IMR-90 (cell line): ENCODE measurements at regions of chr10 and their contacts with region 1.

Region 1: DNA sequence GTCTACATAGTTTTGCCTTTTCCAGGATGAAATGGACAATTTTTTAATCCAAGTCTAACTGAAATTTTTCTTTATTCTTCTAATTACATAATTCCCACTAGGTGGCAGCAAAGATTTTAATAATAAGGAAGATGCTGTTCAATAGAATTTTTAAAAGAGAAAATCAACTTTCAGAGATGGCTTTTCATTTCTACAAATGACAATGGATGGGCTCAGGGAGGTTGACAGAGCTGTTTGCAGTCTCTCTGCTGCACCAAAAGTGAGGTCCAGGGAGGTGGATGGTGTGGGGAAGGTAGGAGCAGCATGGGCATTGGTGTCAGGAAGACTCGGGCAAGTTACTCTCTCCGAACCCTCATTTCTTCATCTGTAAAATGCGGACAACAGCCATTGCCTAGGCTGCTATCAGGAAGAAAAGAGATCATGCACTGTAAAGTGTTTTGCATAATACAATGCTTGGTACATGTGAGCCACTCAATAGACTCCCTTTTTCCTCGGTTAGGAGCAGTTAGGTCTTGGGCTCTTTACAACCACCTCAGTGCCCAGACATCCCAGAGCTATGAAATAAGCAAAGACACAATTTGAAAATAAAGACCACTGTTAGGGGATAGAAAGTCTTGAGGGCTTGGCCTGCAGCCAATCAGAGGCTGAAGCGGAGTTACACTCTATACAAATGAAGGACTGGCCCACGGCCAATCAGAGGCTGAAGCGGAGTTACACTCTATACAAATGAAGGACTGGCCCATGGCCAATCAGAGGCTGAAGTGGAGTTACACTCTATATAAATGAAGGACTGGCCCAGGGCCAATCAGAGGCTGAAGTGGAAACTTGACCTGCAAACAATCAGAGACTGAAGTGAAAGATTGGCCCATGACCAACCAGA is 107.1 kb downstream of the ABLIM1 start:
- DNase-seq: peak; percentile 47
- ATAC-seq: peak; percentile 48
- H3K4me3 ChIP-seq: peak overlapping the region; percentile 16; the same call in 1 of the 2 replicates
- H3K27ac ChIP-seq: no peak overlapping the region
- H3K4me1 ChIP-seq: no peaks in the 10 kb centered on the region
- H3K27me3 ChIP-seq: peaks cover 8% of the 10 kb centered on the region
- CTCF ChIP-seq: peak; percentile 55
- POLR2A ChIP-seq: no peak
- RAD21 ChIP-seq: peak; percentile 51

Region 2: GRCh38 chr10:114060456-114060855 is 490.5 kb before region 1 on chr10:
- CTCF ChIA-PET with region 1: no interaction called
- POLR2A ChIA-PET with region 1: no interaction called
- dilution Hi-C with region 1: no loop called
- in situ Hi-C with region 1: no loop called
- intact Hi-C with region 1: no loop called
- DNase-seq: no peak
- ATAC-seq: no peak
- H3K4me3 ChIP-seq: no peak overlapping the region
- H3K27ac ChIP-seq: no peak overlapping the region
- H3K4me1 ChIP-seq: no peaks in the 10 kb centered on the region
- H3K27me3 ChIP-seq: peaks cover 17% of the 10 kb centered on the region
- CTCF ChIP-seq: no peak
- POLR2A ChIP-seq: no peak
- RAD21 ChIP-seq: no peak

Region 3: GRCh38 chr10:114631666-114632417 is 80.8 kb after region 1 on chr10:
- CTCF ChIA-PET with region 1: no interaction called
- POLR2A ChIA-PET with region 1: no interaction called
- dilution Hi-C with region 1: no loop called
- in situ Hi-C with region 1: no loop called
- intact Hi-C with region 1: loop called (anchors 5 kb)
- DNase-seq: no peak
- ATAC-seq: peak; percentile 35
- H3K4me3 ChIP-seq: peak overlapping the region; percentile 66
- H3K27ac ChIP-seq: peak overlapping the region; percentile 3; the same call in 1 of the 2 replicates
- H3K4me1 ChIP-seq: peaks cover 13% of the 10 kb centered on the region
- H3K27me3 ChIP-seq: peaks cover 5% of the 10 kb centered on the region; the same call in 1 of the 2 replicates
- CTCF ChIP-seq: no peak
- POLR2A ChIP-seq: no peak
- RAD21 ChIP-seq: no peak

Region 4: GRCh38 chr10:114703377-114704107 is 152.5 kb after region 1 on chr10:
- CTCF ChIA-PET with region 1: interaction called, 6 read pairs
- POLR2A ChIA-PET with region 1: interaction called, 3 read pairs
- dilution Hi-C with region 1: no loop called
- in situ Hi-C with region 1: loop called (anchors 5 kb)
- intact Hi-C with region 1: loop called (anchors 1 kb)
- DNase-seq: peak; percentile 43
- ATAC-seq: peak; percentile 70
- H3K4me3 ChIP-seq: no peak overlapping the region
- H3K27ac ChIP-seq: no peak overlapping the region
- H3K4me1 ChIP-seq: 0 out of 2 replicates have a peak, but pooled peaks cover 2% of the 10 kb centered on the region
- H3K27me3 ChIP-seq: no peaks in the 10 kb centered on the region; the same call in 1 of the 2 replicates
- CTCF ChIP-seq: peak; percentile 80
- POLR2A ChIP-seq: no peak
- RAD21 ChIP-seq: peak; percentile 91

Region 5: DNA sequence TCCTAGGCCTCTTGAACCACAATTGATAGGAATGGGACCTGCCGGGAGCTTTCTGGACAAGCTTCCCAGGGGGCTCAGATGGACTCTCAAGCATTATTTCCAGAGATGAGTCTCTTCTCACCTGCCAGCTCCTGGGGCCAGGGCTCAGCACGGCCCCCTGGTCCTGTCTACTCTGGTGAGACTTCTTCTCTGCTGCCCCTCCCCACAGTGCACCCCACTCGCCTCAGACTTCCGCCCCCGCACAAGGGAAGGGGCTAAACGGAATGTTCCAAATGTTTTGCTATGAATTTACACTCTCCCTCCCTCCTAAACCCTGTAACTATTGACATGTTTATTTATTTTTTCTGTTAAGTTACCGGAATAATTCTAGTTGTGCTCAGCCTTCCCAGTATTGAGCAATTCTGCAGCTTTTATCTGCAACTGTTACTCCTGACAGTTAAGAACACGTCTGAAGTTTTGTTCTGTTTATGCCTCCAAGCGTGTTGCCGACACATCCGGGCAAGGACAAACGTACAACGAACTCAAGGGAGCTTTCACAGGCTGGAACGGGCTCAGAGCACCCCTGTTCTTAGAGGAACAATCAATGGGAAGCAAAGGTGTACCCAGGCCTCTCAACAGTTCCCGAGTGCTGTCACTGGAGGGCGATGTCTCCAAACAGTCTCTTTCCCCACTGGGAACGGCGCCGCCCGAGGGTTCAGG is 325.8 kb after region 1 on chr10:
- CTCF ChIA-PET with region 1: no interaction called
- POLR2A ChIA-PET with region 1: no interaction called
- dilution Hi-C with region 1: no loop called
- in situ Hi-C with region 1: no loop called
- intact Hi-C with region 1: loop called (anchors 5 kb)
- DNase-seq: peak; percentile 58
- ATAC-seq: peak; percentile 88
- H3K4me3 ChIP-seq: no peak overlapping the region
- H3K27ac ChIP-seq: no peak overlapping the region
- H3K4me1 ChIP-seq: 0 out of 2 replicates have a peak, but pooled peaks cover 2% of the 10 kb centered on the region
- H3K27me3 ChIP-seq: no peaks in the 10 kb centered on the region
- CTCF ChIP-seq: peak; percentile 87
- POLR2A ChIP-seq: no peak
- RAD21 ChIP-seq: peak; percentile 91